Right ventricle myocardium inferior (tissue), 1 donor: ENCODE measurements at regions of chr3 and their contacts with region 1.

Region 1: GRCh38 chr3:170180908-170181879 is at the start of gene PHC3:
- DNase-seq: peak; percentile 95
- ATAC-seq: peak; percentile 95
- total RNA-seq, gene PHC3: 46.8 TPM

Region 2: DNA sequence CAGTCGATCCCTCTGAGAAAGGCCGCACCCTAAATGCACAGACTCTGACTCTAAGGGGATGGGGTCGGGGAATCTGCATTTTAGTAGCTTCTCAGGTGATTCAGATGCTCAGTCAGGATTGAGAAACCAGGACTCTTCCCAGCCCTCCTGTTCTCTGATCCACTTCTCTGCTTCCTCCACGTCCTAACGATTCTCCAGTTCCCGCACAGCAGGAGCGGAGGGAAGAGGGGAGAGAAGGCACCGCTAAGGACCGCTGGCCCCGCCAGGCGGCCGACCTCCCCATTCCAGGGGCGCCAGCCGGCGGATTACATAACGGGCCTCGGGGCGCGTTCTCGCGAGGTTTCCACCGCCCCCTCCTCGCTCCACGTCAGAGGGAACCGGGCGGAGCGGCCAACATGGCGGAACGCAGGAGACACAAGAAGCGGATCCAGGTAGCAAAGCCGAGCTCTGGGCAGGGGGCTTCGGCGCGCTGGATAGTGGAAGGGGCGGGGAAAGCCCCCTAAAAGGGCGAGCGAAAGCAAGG is 214.7 kb before region 1 on chr3 and contains the start of gene SEC62:
- intact Hi-C with region 1: loop called (anchors 5 kb)
- DNase-seq: peak; percentile 96
- ATAC-seq: peak; percentile 97
- total RNA-seq, gene SEC62: 78.0 TPM

Region 3: GRCh38 chr3:170221924-170222646 is 40.9 kb after region 1 on chr3 and contains the start of gene PRKCI:
- intact Hi-C with region 1: loop called (anchors 1 kb)
- DNase-seq: peak; percentile 98
- ATAC-seq: peak; percentile 99
- total RNA-seq, gene PRKCI: 17.2 TPM

Region 4: DNA sequence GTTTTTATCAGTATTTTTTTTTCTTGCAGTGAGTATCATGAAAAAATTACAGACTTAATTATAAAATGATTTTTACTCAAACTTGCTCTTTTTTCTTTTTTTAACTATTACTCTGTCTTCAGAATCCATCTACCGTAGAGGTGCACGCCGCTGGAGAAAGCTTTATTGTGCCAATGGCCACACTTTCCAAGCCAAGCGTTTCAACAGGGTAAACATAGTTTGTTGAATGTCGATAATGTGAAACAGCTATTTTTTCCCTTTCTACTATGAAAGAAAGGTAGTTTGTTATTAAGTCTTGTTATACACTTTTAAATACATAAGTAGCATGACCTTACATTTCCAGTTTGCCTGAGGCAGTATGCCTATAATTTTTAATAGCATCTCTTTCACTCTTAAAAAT is 86.6 kb after region 1 on chr3:
- intact Hi-C with region 1: no loop called
- DNase-seq: no peak
- ATAC-seq: no peak

Region 5: DNA sequence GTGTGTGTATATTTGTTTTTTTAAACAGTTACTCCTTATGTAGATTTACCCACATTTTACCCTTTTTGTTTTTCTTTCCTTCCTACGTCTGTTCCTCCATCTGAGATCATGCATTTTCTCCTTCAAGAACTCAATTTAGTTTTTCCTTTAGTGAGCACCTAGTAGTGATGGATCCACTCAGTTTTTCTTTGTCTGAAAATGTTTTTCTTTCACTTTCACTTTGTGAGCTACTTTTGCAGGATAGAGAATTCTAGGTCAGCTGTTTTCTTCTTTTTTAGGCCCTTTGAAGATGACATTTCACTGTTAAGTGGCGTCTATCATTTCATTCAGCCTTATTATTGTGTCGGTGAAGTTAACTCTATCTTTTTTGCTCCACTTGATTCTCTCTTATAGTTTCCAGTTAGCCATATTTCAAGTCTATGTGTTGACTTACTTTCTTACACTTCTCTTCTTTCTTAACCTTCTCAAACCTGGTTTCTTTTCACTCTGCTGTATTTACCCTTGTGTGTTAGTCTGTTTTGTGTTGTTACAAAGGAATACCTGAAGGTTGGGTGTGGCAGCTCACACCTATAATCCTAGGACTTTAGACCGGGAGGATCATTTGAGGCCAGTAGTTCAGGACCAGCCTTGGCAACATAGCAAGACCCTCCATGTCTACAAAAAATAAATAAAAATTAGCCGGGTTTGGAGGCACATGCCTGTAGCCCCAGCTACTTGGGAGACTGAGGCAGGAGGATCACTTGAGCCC is 96.8 kb after region 1 on chr3:
- intact Hi-C with region 1: loop called (anchors 10 kb)
- DNase-seq: no peak
- ATAC-seq: no peak

Region 6: GRCh38 chr3:170357176-170357919 is 176.2 kb after region 1 on chr3 and contains the start of gene SKIL:
- intact Hi-C with region 1: loop called (anchors 5 kb)
- DNase-seq: peak; percentile 100
- ATAC-seq: peak; percentile 87
- total RNA-seq, gene SKIL: 14.2 TPM